ENCODE measurements at regions of chr3 and their contacts with region 1.

Region 1: DNA sequence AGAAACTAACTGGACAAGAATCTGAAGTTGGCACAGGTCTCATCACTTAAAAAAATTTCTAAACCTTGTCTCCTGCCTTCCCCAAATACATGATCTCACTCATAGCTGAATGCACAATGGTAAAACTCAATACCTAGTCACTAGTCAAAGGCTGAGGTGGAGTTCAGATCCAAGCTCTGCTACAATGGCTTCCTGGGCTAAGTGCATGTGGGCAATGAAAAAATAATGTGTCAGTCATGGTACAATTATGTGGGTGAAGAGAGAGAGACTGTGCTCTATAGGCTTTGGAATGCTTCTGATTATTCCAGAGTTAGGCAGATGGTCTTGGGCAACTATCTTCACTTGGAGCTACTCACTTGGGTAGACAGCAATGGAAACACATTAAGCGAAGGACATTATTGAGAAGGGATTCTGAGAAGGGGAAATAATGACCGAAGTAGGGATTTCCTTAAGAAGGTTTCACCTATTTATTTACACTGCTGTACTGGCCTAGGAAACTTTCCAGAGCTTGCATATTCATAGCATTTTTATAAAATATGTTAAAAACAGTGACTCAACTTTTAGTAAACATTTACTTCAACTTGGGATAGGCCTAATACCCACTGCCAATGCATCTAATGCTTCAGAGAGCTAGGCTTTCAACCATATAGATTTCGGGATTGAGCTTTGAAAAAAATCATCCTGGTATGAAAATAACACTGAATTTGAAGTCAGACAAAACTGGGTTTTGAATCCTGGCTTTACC is 58.7 kb upstream of the PLXND1 start:
- DNase-seq: no peak
- H3K4me3 ChIP-seq: no peak overlapping the region
- H3K27ac ChIP-seq: peak overlapping the region in 1 of 5 donors; percentile 52
- H3K4me1 ChIP-seq: peaks cover 13 to 32% of the 10 kb centered on the region in 2 donors
- H3K27me3 ChIP-seq: no peaks in the 10 kb centered on the region
- CTCF ChIP-seq: no peak
- POLR2A ChIP-seq: no peak

Region 2: DNA sequence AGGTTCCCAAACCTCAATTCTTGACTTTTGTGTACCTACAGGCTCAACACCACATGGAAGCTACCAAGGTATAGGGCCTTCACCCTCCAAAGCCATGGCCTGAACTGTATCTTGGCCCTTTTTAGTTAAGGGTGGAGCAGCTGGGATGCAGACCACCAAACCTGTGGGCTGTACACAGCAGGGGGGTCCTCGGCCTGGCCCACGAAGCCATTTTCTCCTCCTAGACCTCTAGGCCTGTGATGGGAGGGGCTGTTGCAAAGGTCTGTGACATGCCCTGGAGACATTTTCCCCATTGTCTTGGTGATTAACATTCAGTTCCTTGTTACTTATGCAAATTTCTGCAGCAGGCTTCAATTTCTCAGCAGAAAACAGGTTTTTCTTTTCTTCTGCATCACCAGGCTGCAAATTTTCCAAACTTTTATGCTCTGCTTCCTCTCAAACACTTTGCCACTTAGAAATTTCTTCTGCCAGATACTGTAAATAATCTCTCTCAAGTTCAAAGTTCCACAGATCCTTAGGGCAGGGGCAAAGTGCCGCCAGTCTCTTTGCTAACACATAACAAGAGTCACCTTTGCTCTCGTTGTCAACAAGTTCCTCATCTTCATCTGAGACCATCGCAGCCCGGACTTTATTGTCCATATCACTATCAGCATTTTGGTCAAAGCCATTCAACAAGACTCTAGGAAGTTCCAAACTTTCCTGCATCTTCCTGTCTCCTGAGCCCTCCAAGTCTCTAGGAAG is 32.2 kb after region 1 on chr3:
- intact Hi-C with region 1: loop called in 1 of 2 experiments (anchors 2 kb)
- DNase-seq: no peak
- H3K4me3 ChIP-seq: no peak overlapping the region
- H3K27ac ChIP-seq: no peak overlapping the region
- H3K4me1 ChIP-seq: peaks cover 16 to 32% of the 10 kb centered on the region in 2 donors
- H3K27me3 ChIP-seq: no peaks in the 10 kb centered on the region
- CTCF ChIP-seq: no peak
- POLR2A ChIP-seq: no peak